GM18951 (cell line): ENCODE measurements at regions of chr4 and their contacts with region 1.

Region 1: GRCh38 chr4:59002148-59002547 is 1892.0 kb upstream of the IGFBP7 start:
- POLR2A ChIP-seq: no peak

Region 2: GRCh38 chr4:58871509-58871908 is 130.6 kb before region 1 on chr4:
- in situ Hi-C with region 1: loop called (anchors 25 kb)
- POLR2A ChIP-seq: no peak